ENCODE measurements at regions of chr4 and their contacts with region 1.

Region 1: DNA sequence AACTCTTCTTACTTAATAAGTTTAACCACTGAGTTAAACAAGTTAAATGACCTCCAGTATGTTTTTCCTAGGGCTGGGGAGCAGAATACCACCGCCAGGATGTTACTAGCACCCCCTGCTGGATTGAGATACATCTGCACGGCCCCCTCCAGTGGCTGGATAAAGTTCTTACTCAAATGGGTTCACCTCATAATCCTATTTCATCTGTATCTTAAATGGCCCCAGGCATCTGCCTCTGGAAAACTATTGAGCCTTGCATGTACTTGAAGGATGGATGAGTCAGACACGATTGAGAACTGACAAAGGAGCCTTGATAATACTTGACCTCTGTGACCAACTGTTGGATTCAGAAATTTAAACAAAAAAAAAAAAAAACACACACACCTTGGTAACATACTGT is 61.5 kb upstream of the MMAA start:
- DNase-seq: peak; percentile 67
- H3K4me3 ChIP-seq: no peak overlapping the region; a peak in 1 of 4 replicates
- H3K27ac ChIP-seq: no peak overlapping the region
- H3K4me1 ChIP-seq: no peaks in the 10 kb centered on the region; a peak in 1 of 4 replicates
- H3K27me3 ChIP-seq: no peaks in the 10 kb centered on the region
- CTCF ChIP-seq: peak; percentile 89
- EP300 ChIP-seq: no peak
- RAD21 ChIP-seq: peak; percentile 87

Region 2: DNA sequence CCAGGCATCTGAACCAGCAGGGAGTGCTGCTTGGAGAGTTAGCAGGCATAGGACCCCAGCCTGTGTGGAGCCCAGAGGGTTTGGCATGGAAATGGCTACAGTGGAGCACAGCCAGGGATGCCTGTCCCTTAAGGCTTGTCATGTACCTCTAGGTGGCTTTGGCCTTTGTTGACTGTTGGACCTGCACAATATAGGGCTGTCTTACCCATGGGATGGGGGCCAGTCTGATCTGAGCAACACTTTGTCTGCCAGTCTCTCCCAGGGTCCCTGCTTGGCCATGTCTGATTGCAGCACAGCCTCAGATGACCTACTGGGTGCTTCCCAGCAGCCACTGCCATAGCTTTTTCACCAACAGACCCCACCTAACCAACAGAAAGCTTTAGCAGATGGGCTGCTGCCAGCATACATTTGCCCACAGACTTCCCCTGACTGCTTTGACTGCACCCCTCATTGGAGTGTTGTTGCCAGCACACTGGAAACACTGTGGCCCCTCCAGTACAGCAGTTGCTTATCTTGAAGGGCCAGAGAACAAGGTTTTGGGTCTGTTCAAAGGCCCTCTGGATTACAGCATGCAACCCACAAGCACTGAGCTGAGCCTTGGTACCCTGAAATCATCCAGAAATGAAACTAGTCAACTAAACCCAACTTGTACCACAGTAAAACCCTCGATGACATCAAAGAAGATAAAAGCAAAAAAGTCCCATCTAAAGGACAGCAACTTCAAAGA is 481.8 kb before region 1 on chr4:
- CTCF ChIA-PET with region 1: no interaction called
- POLR2A ChIA-PET with region 1: no interaction called
- DNase-seq: no peak
- H3K4me3 ChIP-seq: no peak overlapping the region
- H3K27ac ChIP-seq: no peak overlapping the region
- H3K4me1 ChIP-seq: no peaks in the 10 kb centered on the region; a peak in 1 of 4 replicates
- H3K27me3 ChIP-seq: no peaks in the 10 kb centered on the region
- CTCF ChIP-seq: no peak
- EP300 ChIP-seq: no peak
- RAD21 ChIP-seq: no peak

Region 3: GRCh38 chr4:145481164-145481941 is 76.4 kb before region 1 on chr4 and contains the start of gene SMAD1:
- CTCF ChIA-PET with region 1: interaction called, 21 read pairs
- POLR2A ChIA-PET with region 1: interaction called, 4 read pairs
- DNase-seq: peak; percentile 88
- H3K4me3 ChIP-seq: peak within 1 kb of the TSS; percentile 75 to 91
- H3K27ac ChIP-seq: peak within 1 kb of the TSS; percentile 78 to 85
- H3K4me1 ChIP-seq: peaks cover 6 to 9% of the 10 kb centered on the region in 2 experiments; a peak in 3 of 4 replicates
- H3K27me3 ChIP-seq: no peaks in the 10 kb centered on the region
- CTCF ChIP-seq: no peak
- EP300 ChIP-seq: no peak; a peak in 1 of 4 replicates
- RAD21 ChIP-seq: no peak
- polyA plus RNA-seq, gene SMAD1: 46.0 and 58.2 TPM in 2 replicates

Region 4: GRCh38 chr4:145541346-145541745 is 16.4 kb before region 1 on chr4:
- CTCF ChIA-PET with region 1: interaction called, 12 read pairs
- POLR2A ChIA-PET with region 1: no interaction called
- DNase-seq: no peak
- H3K4me3 ChIP-seq: no peak overlapping the region
- H3K27ac ChIP-seq: no peak overlapping the region
- H3K4me1 ChIP-seq: peaks cover 13 to 46% of the 10 kb centered on the region in 2 experiments; a peak in 3 of 4 replicates
- H3K27me3 ChIP-seq: no peaks in the 10 kb centered on the region
- CTCF ChIP-seq: no peak
- EP300 ChIP-seq: no peak
- RAD21 ChIP-seq: no peak